Activated CD4-positive, alpha-beta memory T cell treated with anti-CD3 and anti-CD28 coated beads for 36 hours (primary cell): ENCODE measurements at regions of chr16 and their contacts with region 1.

Region 1: GRCh38 chr16:81444448-81445121 is at the start of gene CMIP:
- DNase-seq: peak; percentile 84
- H3K4me3 Mint-ChIP-seq: peak within 1 kb of the TSS; percentile 89
- H3K27ac Mint-ChIP-seq: peak within 1 kb of the TSS; percentile 71
- H3K4me1 Mint-ChIP-seq: peaks cover 32% of the 10 kb centered on the region
- H3K27me3 Mint-ChIP-seq: no peaks in the 10 kb centered on the region
- total RNA-seq, gene CMIP: 35.0 to 36.6 TPM

Region 2: GRCh38 chr16:81469710-81470535 is 25.3 kb after region 1 on chr16:
- CTCF ChIA-PET with region 1: no interaction called
- POLR2A ChIA-PET with region 1: no interaction called
- intact Hi-C with region 1: loop called (anchors 2 kb)
- DNase-seq: peak; percentile 46
- H3K4me3 Mint-ChIP-seq: peak overlapping the region; percentile 21
- H3K27ac Mint-ChIP-seq: peak overlapping the region; percentile 83
- H3K4me1 Mint-ChIP-seq: peaks cover 57% of the 10 kb centered on the region
- H3K27me3 Mint-ChIP-seq: no peaks in the 10 kb centered on the region

Region 3: DNA sequence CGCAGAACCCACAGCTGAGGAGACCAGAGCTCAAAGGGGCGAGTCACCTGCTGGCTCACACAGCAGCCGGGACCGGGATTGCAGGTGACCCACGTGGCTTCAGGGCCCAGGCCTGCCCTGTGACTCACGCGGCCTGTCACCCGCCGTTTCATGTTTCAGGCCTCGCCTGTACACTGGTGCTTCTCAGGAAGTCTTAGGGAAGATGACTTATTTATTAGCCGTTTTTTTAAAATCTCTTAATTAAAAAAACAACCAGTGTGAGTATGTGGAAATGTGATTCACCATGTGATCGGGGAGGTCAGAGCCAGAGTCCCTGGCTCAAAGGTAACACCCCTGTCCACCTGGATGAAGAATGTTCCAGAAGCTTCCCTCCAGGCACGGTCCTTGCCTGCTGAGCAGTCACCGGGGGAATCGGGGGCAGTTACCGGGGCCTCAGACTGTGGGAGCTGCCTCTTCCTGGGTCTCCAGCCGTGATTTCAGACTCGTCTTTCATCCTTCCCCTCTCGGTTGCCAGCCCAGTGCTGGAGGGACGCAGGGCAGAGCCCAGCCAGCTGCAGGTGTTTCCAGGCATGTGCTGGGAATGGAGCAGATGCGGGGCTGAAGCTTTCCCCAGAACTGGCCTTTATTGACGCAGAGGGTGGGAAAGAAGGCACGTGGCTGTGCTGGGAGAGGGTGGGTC is 49.3 kb after region 1 on chr16:
- CTCF ChIA-PET with region 1: no interaction called
- POLR2A ChIA-PET with region 1: no interaction called
- intact Hi-C with region 1: no loop called
- DNase-seq: peak; percentile 70
- H3K4me3 Mint-ChIP-seq: no peak overlapping the region
- H3K27ac Mint-ChIP-seq: no peak overlapping the region
- H3K4me1 Mint-ChIP-seq: peaks cover 17% of the 10 kb centered on the region
- H3K27me3 Mint-ChIP-seq: no peaks in the 10 kb centered on the region

Region 4: GRCh38 chr16:81551151-81551808 is 106.7 kb after region 1 on chr16:
- CTCF ChIA-PET with region 1: no interaction called
- POLR2A ChIA-PET with region 1: no interaction called
- intact Hi-C with region 1: no loop called
- DNase-seq: peak; percentile 51
- H3K4me3 Mint-ChIP-seq: no peak overlapping the region
- H3K27ac Mint-ChIP-seq: peak overlapping the region; percentile 47
- H3K4me1 Mint-ChIP-seq: peaks cover 46% of the 10 kb centered on the region
- H3K27me3 Mint-ChIP-seq: no peaks in the 10 kb centered on the region

Region 5: GRCh38 chr16:81616321-81617055 is 171.9 kb after region 1 on chr16:
- CTCF ChIA-PET with region 1: no interaction called
- POLR2A ChIA-PET with region 1: no interaction called
- intact Hi-C with region 1: loop called (anchors 5 kb)
- DNase-seq: peak; percentile 91
- H3K4me3 Mint-ChIP-seq: peak overlapping the region; percentile 26
- H3K27ac Mint-ChIP-seq: peak overlapping the region; percentile 92
- H3K4me1 Mint-ChIP-seq: peaks cover 18% of the 10 kb centered on the region
- H3K27me3 Mint-ChIP-seq: no peaks in the 10 kb centered on the region

Region 6: GRCh38 chr16:81632392-81633146 is 188.0 kb after region 1 on chr16:
- CTCF ChIA-PET with region 1: no interaction called
- POLR2A ChIA-PET with region 1: no interaction called
- intact Hi-C with region 1: loop called (anchors 5 kb)
- DNase-seq: peak; percentile 92
- H3K4me3 Mint-ChIP-seq: peak overlapping the region; percentile 52
- H3K27ac Mint-ChIP-seq: peak overlapping the region; percentile 94
- H3K4me1 Mint-ChIP-seq: peaks cover 49% of the 10 kb centered on the region
- H3K27me3 Mint-ChIP-seq: no peaks in the 10 kb centered on the region